Right cardiac atrium (tissue), 5 donors: ENCODE measurements at regions of chr4 and their contacts with region 1.

Region 1: DNA sequence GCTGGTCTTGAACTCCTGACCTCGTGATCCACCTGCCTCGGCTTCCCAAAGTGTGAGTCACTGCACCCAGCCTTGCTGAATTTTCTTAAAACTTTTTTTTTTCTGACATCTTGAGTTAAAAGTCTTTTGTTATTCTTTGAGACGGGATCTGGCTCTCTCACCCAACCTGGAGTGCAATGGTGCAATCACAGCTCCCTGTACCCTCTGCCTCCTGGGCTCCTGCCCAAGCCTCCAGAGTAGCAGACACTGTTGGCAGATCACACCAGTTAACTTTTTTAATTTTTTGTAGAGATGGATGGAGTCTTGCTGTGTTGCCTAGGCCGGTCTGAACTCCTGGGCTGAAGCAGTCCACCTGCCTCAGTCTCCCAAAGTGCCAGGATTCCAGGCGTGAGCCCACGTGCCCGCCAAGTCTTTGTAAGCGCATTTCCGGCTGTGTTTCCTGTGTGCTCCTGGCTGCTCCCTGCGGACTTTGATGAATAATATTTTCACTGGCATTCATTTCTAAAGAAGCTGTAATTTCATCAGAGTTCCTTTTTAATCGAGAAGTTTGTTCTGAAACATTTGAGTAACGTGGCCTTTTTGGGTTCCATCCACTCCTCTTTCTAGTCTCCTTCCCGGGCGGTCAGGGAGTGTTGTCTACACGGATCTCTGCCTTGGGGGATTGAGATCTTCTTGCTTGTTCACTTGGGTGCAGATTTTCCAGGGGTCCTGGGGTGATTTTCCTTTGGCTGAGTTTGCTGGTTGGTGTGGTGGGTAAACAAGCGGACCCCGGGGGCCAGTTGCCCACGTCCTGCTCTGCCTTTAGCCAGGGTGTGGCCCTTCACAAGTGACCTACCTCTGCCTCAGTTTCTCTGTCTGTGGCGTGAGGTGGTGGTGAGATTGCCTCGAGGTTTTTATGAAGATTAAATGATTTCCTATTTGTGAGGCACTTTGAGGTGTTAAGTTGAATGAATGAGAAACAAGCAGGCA is 44.4 kb downstream of the PCGF3 start:
- DNase-seq: peak; percentile 33 to 67 (median 66)
- ATAC-seq: peak; percentile 54 to 82
- H3K4me3 ChIP-seq: no peak overlapping the region
- H3K27ac ChIP-seq: peak overlapping the region; percentile 61
- H3K4me1 ChIP-seq: no peaks in the 10 kb centered on the region
- H3K27me3 ChIP-seq: no peaks in the 10 kb centered on the region

Region 2: DNA sequence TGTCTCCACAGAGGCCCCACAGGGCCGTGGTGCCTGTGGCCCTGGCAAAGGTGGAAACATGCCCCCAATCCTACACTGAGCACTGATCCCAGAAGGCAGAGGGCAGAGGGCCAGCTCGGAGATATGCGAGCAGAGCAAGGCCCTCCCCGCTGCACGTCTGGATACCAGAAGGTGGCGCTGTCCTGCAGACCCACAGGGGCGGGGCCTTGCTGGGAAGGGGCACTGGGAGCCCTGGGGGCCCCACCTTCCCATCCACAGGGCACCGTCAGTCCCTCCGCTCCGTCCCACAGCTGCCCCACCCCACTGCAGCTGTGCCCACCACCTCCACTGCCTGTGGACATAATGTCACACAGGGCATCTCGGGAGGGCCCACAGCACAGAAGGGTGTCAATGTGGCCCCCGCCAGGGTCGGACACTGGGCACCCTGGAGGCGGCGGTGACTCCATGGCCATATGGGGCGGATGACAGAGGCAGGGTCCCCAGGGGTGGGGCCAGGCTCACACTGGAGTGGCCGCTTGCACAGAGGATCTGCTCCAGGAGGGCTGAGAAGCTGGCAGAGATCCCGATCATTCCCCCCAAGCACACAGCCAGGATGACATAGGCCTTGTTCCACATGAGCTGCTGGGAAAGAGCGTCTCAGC is 65.9 kb before region 1 on chr4:
- intact Hi-C with region 1: no loop called
- DNase-seq: peak; percentile 84 to 92 (median 88)
- ATAC-seq: peak; percentile 6 to 13
- H3K4me3 ChIP-seq: no peak overlapping the region
- H3K27ac ChIP-seq: no peak overlapping the region
- H3K4me1 ChIP-seq: peaks cover 9% of the 10 kb centered on the region
- H3K27me3 ChIP-seq: no peaks in the 10 kb centered on the region

Region 3: GRCh38 chr4:986879-987623 is 237.1 kb after region 1 on chr4 and contains the start of gene IDUA:
- intact Hi-C with region 1: loop called in 1 of 4 experiments (anchors 10 kb)
- DNase-seq: peak; percentile 82 to 94 (median 94)
- ATAC-seq: peak; percentile 87 to 90
- H3K4me3 ChIP-seq: peak within 1 kb of the TSS; percentile 74
- H3K27ac ChIP-seq: no peak within 1 kb of the TSS
- H3K4me1 ChIP-seq: no peaks in the 10 kb centered on the region
- H3K27me3 ChIP-seq: no peaks in the 10 kb centered on the region
- total RNA-seq, gene IDUA: 14.7 to 17.4 (median 17.1) TPM